CD4-positive, alpha-beta memory T cell (primary cell): ENCODE measurements at regions of chr16 and their contacts with region 1.

Region 1: GRCh38 chr16:21190599-21190998 is 20.8 kb downstream of the ZP2 start:
- DNase-seq: no peak
- H3K4me3 ChIP-seq: no peak overlapping the region
- H3K4me3 Mint-ChIP-seq: no peak overlapping the region
- H3K27ac ChIP-seq: no peak overlapping the region
- H3K27ac Mint-ChIP-seq: no peak overlapping the region
- H3K4me1 ChIP-seq: peaks cover 4% of the 10 kb centered on the region
- H3K4me1 Mint-ChIP-seq: peaks cover 3 to 6% (median 4%) of the 10 kb centered on the region in 4 donors
- H3K27me3 ChIP-seq: no peaks in the 10 kb centered on the region
- H3K27me3 Mint-ChIP-seq: peaks cover 5 to 15% of the 10 kb centered on the region in 2 donors

Region 2: GRCh38 chr16:20838240-20838639 is 352.4 kb before region 1 on chr16:
- CTCF ChIA-PET with region 1: no interaction called
- POLR2A ChIA-PET with region 1: no interaction called
- intact Hi-C with region 1: no loop called
- DNase-seq: no peak
- H3K4me3 ChIP-seq: no peak overlapping the region
- H3K4me3 Mint-ChIP-seq: no peak overlapping the region
- H3K27ac ChIP-seq: no peak overlapping the region
- H3K27ac Mint-ChIP-seq: no peak overlapping the region
- H3K4me1 ChIP-seq: peaks cover 2% of the 10 kb centered on the region
- H3K4me1 Mint-ChIP-seq: peaks cover 0 to 1% (median 0%) of the 10 kb centered on the region in 4 donors
- H3K27me3 ChIP-seq: no peaks in the 10 kb centered on the region
- H3K27me3 Mint-ChIP-seq: no peaks in the 10 kb centered on the region

Region 3: DNA sequence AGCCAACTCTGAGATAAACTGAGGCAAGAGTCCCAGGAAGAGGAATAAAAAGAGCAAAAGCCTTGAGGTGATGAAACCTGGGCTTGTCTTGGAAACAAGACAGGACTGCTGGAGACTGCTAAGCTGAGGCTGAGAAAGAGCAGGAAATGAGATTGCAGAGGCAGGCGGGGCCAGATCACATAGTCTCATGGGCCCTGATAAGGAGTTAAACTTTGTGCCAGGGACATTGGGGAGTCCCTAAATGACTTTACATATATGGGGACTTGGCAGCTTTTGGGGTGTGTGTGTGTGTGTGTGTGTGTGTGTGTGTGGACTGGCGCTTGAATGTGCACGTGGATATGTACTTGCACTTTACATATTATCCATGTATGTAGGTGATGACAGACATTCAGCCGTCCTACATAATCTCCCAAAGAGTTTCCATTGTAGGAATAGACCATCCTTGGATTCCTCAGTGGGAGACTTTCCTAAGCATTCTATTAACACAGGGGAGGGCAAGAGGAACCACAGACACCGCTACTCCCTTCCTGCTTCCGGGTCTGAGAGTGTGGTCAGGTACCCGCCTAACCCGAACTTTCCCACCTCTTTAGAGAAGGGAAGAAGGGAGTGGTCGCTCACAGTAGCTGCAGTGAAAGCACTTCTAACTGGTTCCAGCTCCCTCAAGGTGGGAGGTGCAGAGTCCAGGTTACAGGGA is 166.9 kb before region 1 on chr16:
- CTCF ChIA-PET with region 1: no interaction called
- POLR2A ChIA-PET with region 1: no interaction called
- intact Hi-C with region 1: no loop called
- DNase-seq: peak in 2 of 5 donors; percentile 1 to 3
- H3K4me3 ChIP-seq: no peak overlapping the region
- H3K4me3 Mint-ChIP-seq: peak overlapping the region in 5 of 8 donors; percentile 4 to 68 (median 35)
- H3K27ac ChIP-seq: no peak overlapping the region
- H3K27ac Mint-ChIP-seq: peak overlapping the region in 3 of 7 donors; percentile 20 to 55 (median 37)
- H3K4me1 ChIP-seq: peaks cover 16% of the 10 kb centered on the region
- H3K4me1 Mint-ChIP-seq: peaks cover 5 to 16% (median 12%) of the 10 kb centered on the region in 4 donors
- H3K27me3 ChIP-seq: no peaks in the 10 kb centered on the region
- H3K27me3 Mint-ChIP-seq: peaks cover 0 to 3% of the 10 kb centered on the region in 2 donors

Region 4: GRCh38 chr16:21134053-21134452 is 56.5 kb before region 1 on chr16:
- CTCF ChIA-PET with region 1: no interaction called
- POLR2A ChIA-PET with region 1: no interaction called
- intact Hi-C with region 1: no loop called
- DNase-seq: no peak
- H3K4me3 ChIP-seq: no peak overlapping the region
- H3K4me3 Mint-ChIP-seq: no peak overlapping the region
- H3K27ac ChIP-seq: no peak overlapping the region
- H3K27ac Mint-ChIP-seq: no peak overlapping the region
- H3K4me1 ChIP-seq: no peaks in the 10 kb centered on the region
- H3K4me1 Mint-ChIP-seq: no peaks in the 10 kb centered on the region
- H3K27me3 ChIP-seq: no peaks in the 10 kb centered on the region
- H3K27me3 Mint-ChIP-seq: peaks cover 4 to 11% of the 10 kb centered on the region in 2 donors

Region 5: DNA sequence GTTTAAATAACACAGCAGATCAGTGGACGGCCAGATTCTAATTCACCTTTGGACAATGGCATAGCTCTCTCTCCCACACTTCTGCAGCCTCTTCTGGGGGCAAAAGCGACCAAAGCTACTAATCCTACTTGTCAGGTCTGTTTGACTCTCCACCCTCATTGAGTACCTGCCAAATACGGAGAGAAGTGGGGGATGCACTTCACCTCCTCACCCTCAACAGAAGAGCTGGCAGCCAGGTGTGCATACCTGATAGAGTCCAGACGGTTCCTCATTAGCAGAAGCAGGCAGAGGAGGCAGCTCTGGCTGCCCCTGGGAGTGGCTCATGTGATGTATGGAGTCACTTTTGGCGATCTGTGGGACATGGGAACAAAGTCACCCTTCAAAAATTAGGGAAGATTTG is 44.9 kb before region 1 on chr16:
- CTCF ChIA-PET with region 1: no interaction called
- POLR2A ChIA-PET with region 1: no interaction called
- intact Hi-C with region 1: no loop called
- DNase-seq: no peak
- H3K4me3 ChIP-seq: no peak overlapping the region
- H3K4me3 Mint-ChIP-seq: no peak overlapping the region
- H3K27ac ChIP-seq: no peak overlapping the region
- H3K27ac Mint-ChIP-seq: no peak overlapping the region
- H3K4me1 ChIP-seq: no peaks in the 10 kb centered on the region
- H3K4me1 Mint-ChIP-seq: no peaks in the 10 kb centered on the region
- H3K27me3 ChIP-seq: no peaks in the 10 kb centered on the region
- H3K27me3 Mint-ChIP-seq: peaks cover 17 to 38% of the 10 kb centered on the region in 2 donors

Region 6: GRCh38 chr16:21554795-21555585 is 364.4 kb after region 1 on chr16:
- CTCF ChIA-PET with region 1: interaction called, 13 read pairs
- POLR2A ChIA-PET with region 1: no interaction called
- intact Hi-C with region 1: no loop called
- DNase-seq: peak; percentile 84 to 88 (median 87)
- H3K4me3 ChIP-seq: no peak overlapping the region
- H3K4me3 Mint-ChIP-seq: peak overlapping the region; percentile 53 to 87 (median 75)
- H3K27ac ChIP-seq: no peak overlapping the region
- H3K27ac Mint-ChIP-seq: peak overlapping the region in 6 of 7 donors; percentile 9 to 75 (median 51)
- H3K4me1 ChIP-seq: peaks cover 9% of the 10 kb centered on the region
- H3K4me1 Mint-ChIP-seq: peaks cover 3 to 12% (median 6%) of the 10 kb centered on the region in 4 donors
- H3K27me3 ChIP-seq: no peaks in the 10 kb centered on the region
- H3K27me3 Mint-ChIP-seq: peaks cover 0 to 5% of the 10 kb centered on the region in 2 donors

Region 7: GRCh38 chr16:21560462-21560861 is 369.9 kb after region 1 on chr16:
- CTCF ChIA-PET with region 1: interaction called, 10 read pairs
- POLR2A ChIA-PET with region 1: no interaction called
- intact Hi-C with region 1: no loop called
- DNase-seq: no peak
- H3K4me3 ChIP-seq: no peak overlapping the region
- H3K4me3 Mint-ChIP-seq: no peak overlapping the region
- H3K27ac ChIP-seq: no peak overlapping the region
- H3K27ac Mint-ChIP-seq: no peak overlapping the region
- H3K4me1 ChIP-seq: peaks cover 2% of the 10 kb centered on the region
- H3K4me1 Mint-ChIP-seq: peaks cover 1 to 10% (median 2%) of the 10 kb centered on the region in 4 donors
- H3K27me3 ChIP-seq: no peaks in the 10 kb centered on the region
- H3K27me3 Mint-ChIP-seq: no peaks in the 10 kb centered on the region